ENCODE measurements at regions of chr11 and their contacts with region 1.

Region 1: DNA sequence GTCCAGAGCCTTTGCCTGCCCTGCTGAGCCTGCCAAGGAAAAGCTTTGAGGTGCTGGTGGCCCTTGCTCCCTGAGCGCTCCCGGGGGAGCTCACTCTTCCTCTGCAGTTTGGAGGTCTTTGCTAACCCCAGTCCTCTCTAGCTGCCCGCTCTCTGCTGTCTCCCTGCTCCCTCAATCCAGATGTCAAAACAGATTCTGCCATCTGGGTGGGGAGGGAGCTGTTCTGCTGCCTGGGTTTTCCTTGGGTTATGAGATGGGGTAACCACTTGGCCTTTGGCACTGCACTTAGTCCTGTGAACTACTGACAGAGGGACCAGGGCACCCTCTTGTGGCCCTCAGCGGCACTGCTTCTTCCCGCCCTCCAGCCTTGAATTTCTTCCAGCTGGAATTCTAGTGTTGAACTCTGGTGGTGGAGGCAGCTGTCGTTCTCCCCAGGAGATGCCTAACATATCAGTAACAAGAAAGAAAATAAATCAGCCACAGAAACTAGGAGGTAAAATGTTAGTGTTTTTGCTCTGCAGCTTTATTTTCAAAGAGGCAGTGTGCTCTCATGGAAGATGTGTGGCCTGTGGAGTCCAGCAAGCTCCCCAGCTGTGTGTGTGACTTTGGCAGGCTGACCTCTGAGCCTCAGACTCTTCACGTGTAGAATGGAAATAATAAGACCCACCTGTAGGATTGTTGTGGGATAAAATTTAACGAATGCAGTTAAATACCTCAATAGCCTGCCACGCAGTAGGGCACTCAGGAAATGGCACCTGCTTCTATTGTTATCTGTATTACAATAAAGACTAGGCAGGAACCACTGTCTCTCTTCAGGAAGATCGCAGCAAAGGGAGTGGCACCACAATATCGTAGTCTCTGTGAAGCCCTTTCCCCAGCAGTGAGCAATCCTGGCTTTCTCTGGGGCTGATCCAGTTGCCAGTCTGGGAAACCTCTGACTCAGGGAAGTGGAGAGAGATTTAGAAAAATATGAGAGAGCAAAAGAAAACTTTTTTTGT is 23.4 kb downstream of the ARFGAP2 start:
- DNase-seq: peak; percentile 77
- ATAC-seq: peak; percentile 80
- H3K4me3 Mint-ChIP-seq: no peak overlapping the region
- H3K27ac Mint-ChIP-seq: no peak overlapping the region
- H3K4me1 Mint-ChIP-seq: peaks cover 26% of the 10 kb centered on the region
- H3K27me3 Mint-ChIP-seq: no peaks in the 10 kb centered on the region

Region 2: GRCh38 chr11:46889689-46890475 is 263.4 kb before region 1 on chr11:
- CTCF ChIA-PET with region 1: interaction called, 29 read pairs
- POLR2A ChIA-PET with region 1: no interaction called
- intact Hi-C with region 1: loop called (anchors 1 kb)
- DNase-seq: peak; percentile 83
- ATAC-seq: peak; percentile 86
- H3K4me3 Mint-ChIP-seq: no peak overlapping the region
- H3K27ac Mint-ChIP-seq: no peak overlapping the region
- H3K4me1 Mint-ChIP-seq: peaks cover 2% of the 10 kb centered on the region
- H3K27me3 Mint-ChIP-seq: no peaks in the 10 kb centered on the region

Region 3: DNA sequence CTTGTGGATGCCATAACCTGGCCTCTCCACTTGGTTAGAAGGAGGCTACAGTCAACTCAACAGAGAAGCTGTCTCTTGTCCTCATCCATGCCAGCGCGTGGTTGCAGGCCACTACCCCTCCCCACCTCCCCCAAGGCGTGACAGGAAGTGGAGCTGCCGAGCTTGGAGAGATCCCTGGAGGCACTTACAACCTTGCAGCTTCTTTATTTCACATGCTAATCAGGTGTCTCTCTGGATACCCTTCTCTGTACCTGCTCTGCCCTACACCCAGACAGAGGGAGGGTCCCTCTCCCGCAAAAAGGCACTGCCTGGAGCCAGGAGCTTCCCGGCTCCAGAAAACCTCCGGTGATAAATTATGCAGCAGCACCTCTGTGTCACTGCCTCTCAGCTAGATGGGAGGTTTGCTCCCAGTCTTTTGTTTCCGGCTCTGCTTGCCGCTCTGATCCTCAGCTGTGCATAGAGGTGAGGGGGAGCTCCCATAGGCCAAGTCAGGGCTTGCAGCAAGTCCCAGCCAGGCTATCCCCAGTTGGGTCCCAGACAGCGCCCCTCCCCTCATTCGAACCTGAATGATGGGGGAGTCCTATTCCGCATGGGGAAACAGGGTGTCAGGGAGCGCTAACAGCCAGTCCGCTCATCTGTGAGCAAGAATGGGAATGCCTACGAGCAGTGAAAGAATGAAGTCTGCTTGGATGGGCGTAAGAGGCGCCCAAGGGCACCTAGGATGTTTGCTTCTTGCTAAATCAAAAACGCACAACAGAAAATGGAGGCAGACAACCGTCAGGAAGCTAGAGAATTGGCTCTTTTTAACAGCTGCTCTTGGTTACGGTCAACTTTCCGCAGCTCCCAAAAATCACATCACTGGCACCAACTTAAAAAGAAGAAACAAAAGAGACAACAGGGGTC is 240.5 kb before region 1 on chr11:
- CTCF ChIA-PET with region 1: interaction called, 21 read pairs
- POLR2A ChIA-PET with region 1: interaction called, 4 read pairs
- intact Hi-C with region 1: no loop called
- DNase-seq: no peak
- ATAC-seq: no peak
- H3K4me3 Mint-ChIP-seq: no peak overlapping the region
- H3K27ac Mint-ChIP-seq: no peak overlapping the region
- H3K4me1 Mint-ChIP-seq: peaks cover 12% of the 10 kb centered on the region
- H3K27me3 Mint-ChIP-seq: peaks cover 57% of the 10 kb centered on the region

Region 4: GRCh38 chr11:46918083-46918787 is 235.0 kb before region 1 on chr11 and contains the start of gene LRP4:
- CTCF ChIA-PET with region 1: interaction called, 21 read pairs
- POLR2A ChIA-PET with region 1: interaction called, 4 read pairs
- intact Hi-C with region 1: loop called (anchors 1 kb)
- DNase-seq: peak; percentile 62
- ATAC-seq: peak; percentile 57
- H3K4me3 Mint-ChIP-seq: peak within 1 kb of the TSS; percentile 64
- H3K27ac Mint-ChIP-seq: no peak within 1 kb of the TSS
- H3K4me1 Mint-ChIP-seq: peaks cover 25% of the 10 kb centered on the region
- H3K27me3 Mint-ChIP-seq: peaks cover 49% of the 10 kb centered on the region
- total RNA-seq, gene LRP4: 0.02 to 0.18 TPM

Region 5: DNA sequence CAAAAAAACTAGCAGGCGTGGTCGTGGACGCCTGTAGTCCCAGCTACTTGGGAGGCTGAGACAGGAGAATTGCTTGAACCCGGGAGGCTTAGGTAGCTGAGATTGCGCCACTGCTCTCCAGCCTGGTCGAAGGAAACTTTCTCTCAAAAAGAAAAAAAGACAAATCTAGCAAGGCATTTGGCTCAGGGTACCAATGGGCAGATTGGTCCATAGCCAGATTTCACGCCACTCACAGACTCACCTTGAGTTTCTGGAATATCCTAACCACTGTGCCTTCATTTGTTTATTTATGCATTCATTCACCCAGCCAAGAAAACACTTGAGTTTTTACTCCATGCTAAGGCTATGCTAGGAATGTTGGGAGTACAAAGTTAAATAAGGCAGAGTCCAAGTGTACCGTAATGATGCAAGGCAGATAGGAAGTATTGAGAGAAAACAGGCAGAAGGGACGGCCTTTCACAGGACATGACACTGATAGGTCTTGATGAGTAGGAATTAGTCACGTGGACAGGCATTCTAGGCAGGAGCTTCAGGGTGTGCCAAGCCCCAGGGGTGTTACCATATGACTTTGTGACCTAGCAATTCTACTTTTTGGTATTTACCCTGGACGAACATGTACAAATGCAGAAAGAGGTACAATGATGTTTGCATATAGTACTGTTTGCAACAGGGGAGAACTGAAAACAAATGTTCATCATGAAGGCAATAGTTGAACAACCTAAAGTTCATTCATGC is 36.0 kb after region 1 on chr11:
- CTCF ChIA-PET with region 1: no interaction called
- POLR2A ChIA-PET with region 1: no interaction called
- intact Hi-C with region 1: no loop called
- DNase-seq: no peak
- ATAC-seq: no peak
- H3K4me3 Mint-ChIP-seq: no peak overlapping the region
- H3K27ac Mint-ChIP-seq: no peak overlapping the region
- H3K4me1 Mint-ChIP-seq: peaks cover 7% of the 10 kb centered on the region
- H3K27me3 Mint-ChIP-seq: peaks cover 15% of the 10 kb centered on the region